Breast epithelium (tissue), 4 donors: ENCODE measurements at regions of chr10 and their contacts with region 1.

Region 1: GRCh38 chr10:23015021-23015707 is 80.2 kb upstream of the MSRB2 start:
- DNase-seq: no peak
- H3K4me3 ChIP-seq: no peak overlapping the region
- H3K27ac ChIP-seq: no peak overlapping the region
- H3K4me1 ChIP-seq: no peaks in the 10 kb centered on the region
- H3K27me3 ChIP-seq: no peaks in the 10 kb centered on the region
- CTCF ChIP-seq: no peak
- POLR2A ChIP-seq: no peak

Region 2: GRCh38 chr10:22931948-22932347 is 83.2 kb before region 1 on chr10:
- intact Hi-C with region 1: no loop called
- DNase-seq: no peak
- H3K4me3 ChIP-seq: no peak overlapping the region
- H3K27ac ChIP-seq: no peak overlapping the region
- H3K4me1 ChIP-seq: no peaks in the 10 kb centered on the region
- H3K27me3 ChIP-seq: peaks cover 0 to 9% of the 10 kb centered on the region in 2 donors
- CTCF ChIP-seq: no peak
- POLR2A ChIP-seq: no peak

Region 3: DNA sequence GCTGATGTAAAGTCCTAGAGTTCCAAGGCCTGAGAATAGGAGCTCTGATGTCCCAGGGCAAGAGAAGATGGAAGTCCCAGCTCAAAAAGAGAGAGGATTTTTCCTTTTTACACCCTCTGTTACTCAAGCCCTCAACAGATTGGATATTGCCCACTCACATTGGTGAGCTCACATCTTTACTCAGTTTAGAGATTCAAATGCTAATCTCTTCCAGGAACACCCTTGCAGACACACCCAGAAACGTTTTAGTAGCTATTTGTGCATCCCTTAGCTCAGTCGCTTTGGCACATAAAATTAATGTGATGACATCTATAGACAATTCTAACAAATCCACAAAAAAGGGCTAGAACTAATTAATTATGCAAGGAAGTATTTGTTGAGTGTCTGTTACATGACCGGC is 60.2 kb before region 1 on chr10:
- intact Hi-C with region 1: no loop called
- DNase-seq: no peak
- H3K4me3 ChIP-seq: no peak overlapping the region
- H3K27ac ChIP-seq: no peak overlapping the region
- H3K4me1 ChIP-seq: no peaks in the 10 kb centered on the region
- H3K27me3 ChIP-seq: no peaks in the 10 kb centered on the region
- CTCF ChIP-seq: no peak
- POLR2A ChIP-seq: no peak

Region 4: DNA sequence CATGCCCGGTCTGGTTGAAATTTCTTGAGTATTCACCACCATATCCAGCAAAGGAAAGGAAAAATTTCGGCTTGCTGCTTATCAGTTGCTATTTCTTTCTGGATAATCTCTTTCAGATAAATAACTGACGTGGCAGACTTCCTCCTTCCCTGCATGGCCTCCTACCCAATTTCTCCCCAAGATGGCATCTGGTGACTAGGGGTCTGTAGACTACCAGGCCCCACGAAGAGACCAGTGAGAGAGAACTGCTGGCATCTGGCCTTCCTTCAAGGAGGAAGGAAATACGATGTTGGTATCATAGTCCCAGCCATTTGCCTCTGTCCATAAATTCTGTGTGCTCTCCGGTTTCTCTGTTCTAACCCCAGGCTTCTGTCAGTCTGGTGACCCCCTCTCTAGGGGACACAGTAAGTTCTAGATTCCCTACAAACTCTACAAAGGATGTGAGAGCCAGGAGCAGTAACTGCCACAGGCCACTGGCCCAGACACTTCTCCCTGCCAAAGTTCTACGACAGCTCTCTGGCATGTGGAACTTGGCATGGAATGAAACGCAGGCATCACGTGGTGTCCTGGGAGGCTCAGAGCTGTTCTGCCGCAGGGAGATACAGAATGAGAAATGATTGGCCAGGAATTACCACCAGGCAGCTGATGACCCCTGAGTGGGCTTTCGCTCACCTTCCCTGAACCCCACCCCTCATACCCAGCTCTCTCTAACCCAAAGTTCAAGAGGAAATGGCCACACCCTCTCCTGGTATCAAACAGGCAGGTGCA is 50.2 kb after region 1 on chr10:
- intact Hi-C with region 1: no loop called
- DNase-seq: peak; percentile 72 to 80
- H3K4me3 ChIP-seq: no peak overlapping the region
- H3K27ac ChIP-seq: peak overlapping the region in 1 of 2 donors; percentile 48
- H3K4me1 ChIP-seq: no peaks in the 10 kb centered on the region
- H3K27me3 ChIP-seq: no peaks in the 10 kb centered on the region
- CTCF ChIP-seq: no peak
- POLR2A ChIP-seq: no peak

Region 5: GRCh38 chr10:23399701-23400144 is 384.6 kb after region 1 on chr10:
- intact Hi-C with region 1: loop called (anchors 10 kb)
- DNase-seq: no peak
- H3K4me3 ChIP-seq: no peak overlapping the region
- H3K27ac ChIP-seq: no peak overlapping the region
- H3K4me1 ChIP-seq: no peaks in the 10 kb centered on the region
- H3K27me3 ChIP-seq: no peaks in the 10 kb centered on the region
- CTCF ChIP-seq: no peak
- POLR2A ChIP-seq: no peak

Region 6: GRCh38 chr10:23448802-23449570 is 433.8 kb after region 1 on chr10:
- intact Hi-C with region 1: no loop called
- DNase-seq: no peak
- H3K4me3 ChIP-seq: no peak overlapping the region
- H3K27ac ChIP-seq: no peak overlapping the region
- H3K4me1 ChIP-seq: no peaks in the 10 kb centered on the region
- H3K27me3 ChIP-seq: no peaks in the 10 kb centered on the region
- CTCF ChIP-seq: no peak
- POLR2A ChIP-seq: no peak